CD4-positive, alpha-beta T cell (primary cell): ENCODE measurements at regions of chr3 and their contacts with region 1.

Region 1: GRCh38 chr3:15268033-15268631 is 62.1 kb downstream of the CAPN7 start:
- DNase-seq: peak; percentile 79 to 93 (median 82)
- ATAC-seq: peak; percentile 39
- H3K4me3 ChIP-seq: no peak overlapping the region
- H3K4me3 Mint-ChIP-seq: peak overlapping the region; percentile 8
- H3K27ac ChIP-seq: no peak overlapping the region
- H3K27ac Mint-ChIP-seq: peak overlapping the region; percentile 75
- H3K4me1 ChIP-seq: peaks cover 83% of the 10 kb centered on the region
- H3K4me1 Mint-ChIP-seq: peaks cover 86% of the 10 kb centered on the region
- H3K27me3 ChIP-seq: no peaks in the 10 kb centered on the region
- H3K27me3 Mint-ChIP-seq: no peaks in the 10 kb centered on the region
- CTCF ChIP-seq: peak; percentile 84

Region 2: DNA sequence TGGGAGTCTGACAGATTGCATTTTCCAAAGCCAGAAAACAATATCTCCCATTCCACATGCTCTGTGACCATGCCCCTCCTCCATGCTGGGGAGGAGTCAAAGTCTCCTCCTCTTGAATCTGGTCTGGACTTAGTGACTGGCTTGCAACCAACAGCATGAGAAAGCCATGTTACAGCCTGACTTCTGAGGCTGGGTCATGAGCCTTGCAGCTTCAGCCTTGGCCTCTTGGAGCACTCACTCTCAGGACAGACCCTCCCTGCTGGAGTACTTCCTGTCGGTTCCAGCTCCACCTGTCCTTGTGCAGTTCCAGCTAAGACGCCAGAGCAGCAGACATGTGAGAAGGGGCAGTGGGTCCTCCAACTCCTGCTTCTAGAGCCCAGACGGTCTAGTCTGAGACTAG is 119.5 kb before region 1 on chr3:
- CTCF ChIA-PET with region 1: no interaction called
- POLR2A ChIA-PET with region 1: no interaction called
- intact Hi-C with region 1: no loop called
- DNase-seq: no peak
- ATAC-seq: no peak
- H3K4me3 ChIP-seq: no peak overlapping the region
- H3K4me3 Mint-ChIP-seq: no peak overlapping the region
- H3K27ac ChIP-seq: no peak overlapping the region
- H3K27ac Mint-ChIP-seq: no peak overlapping the region
- H3K4me1 ChIP-seq: no peaks in the 10 kb centered on the region
- H3K4me1 Mint-ChIP-seq: no peaks in the 10 kb centered on the region
- H3K27me3 ChIP-seq: peaks cover 0 to 16% of the 10 kb centered on the region in 2 experiments
- H3K27me3 Mint-ChIP-seq: peaks cover 31% of the 10 kb centered on the region
- CTCF ChIP-seq: no peak

Region 3: GRCh38 chr3:15291589-15292541 is 23.7 kb after region 1 on chr3:
- CTCF ChIA-PET with region 1: interaction called, 9 read pairs
- POLR2A ChIA-PET with region 1: interaction called, 11 read pairs
- intact Hi-C with region 1: loop called in 1 of 2 experiments (anchors 1 kb)
- DNase-seq: peak; percentile 24 to 90 (median 54)
- ATAC-seq: peak; percentile 90
- H3K4me3 ChIP-seq: peak overlapping the region; percentile 17
- H3K4me3 Mint-ChIP-seq: peak overlapping the region; percentile 81
- H3K27ac ChIP-seq: peak overlapping the region; percentile 46 to 71
- H3K27ac Mint-ChIP-seq: peak overlapping the region; percentile 94
- H3K4me1 ChIP-seq: peaks cover 89% of the 10 kb centered on the region
- H3K4me1 Mint-ChIP-seq: peaks cover 96% of the 10 kb centered on the region
- H3K27me3 ChIP-seq: no peaks in the 10 kb centered on the region
- H3K27me3 Mint-ChIP-seq: no peaks in the 10 kb centered on the region
- CTCF ChIP-seq: no peak

Region 4: GRCh38 chr3:15319575-15319974 is 51.4 kb after region 1 on chr3:
- CTCF ChIA-PET with region 1: interaction called, 5 read pairs
- POLR2A ChIA-PET with region 1: interaction called, 11 read pairs
- intact Hi-C with region 1: loop called in 1 of 2 experiments (anchors 2 kb)
- DNase-seq: no peak
- ATAC-seq: no peak
- H3K4me3 ChIP-seq: no peak overlapping the region
- H3K4me3 Mint-ChIP-seq: peak overlapping the region; percentile 43
- H3K27ac ChIP-seq: no peak overlapping the region
- H3K27ac Mint-ChIP-seq: peak overlapping the region; percentile 77
- H3K4me1 ChIP-seq: peaks cover 73% of the 10 kb centered on the region
- H3K4me1 Mint-ChIP-seq: peaks cover 75% of the 10 kb centered on the region
- H3K27me3 ChIP-seq: no peaks in the 10 kb centered on the region
- H3K27me3 Mint-ChIP-seq: no peaks in the 10 kb centered on the region
- CTCF ChIP-seq: no peak

Region 5: GRCh38 chr3:15377961-15378791 is 110.0 kb after region 1 on chr3:
- CTCF ChIA-PET with region 1: interaction called, 14 read pairs
- POLR2A ChIA-PET with region 1: interaction called, 10 read pairs
- intact Hi-C with region 1: loop called (anchors 1 kb)
- DNase-seq: peak; percentile 87 to 98 (median 92)
- ATAC-seq: peak; percentile 95
- H3K4me3 ChIP-seq: no peak overlapping the region
- H3K4me3 Mint-ChIP-seq: peak overlapping the region; percentile 2
- H3K27ac ChIP-seq: peak overlapping the region; percentile 79 to 94
- H3K27ac Mint-ChIP-seq: peak overlapping the region; percentile 91
- H3K4me1 ChIP-seq: peaks cover 8% of the 10 kb centered on the region
- H3K4me1 Mint-ChIP-seq: peaks cover 10% of the 10 kb centered on the region
- H3K27me3 ChIP-seq: no peaks in the 10 kb centered on the region
- H3K27me3 Mint-ChIP-seq: no peaks in the 10 kb centered on the region
- CTCF ChIP-seq: peak; percentile 82

Region 6: GRCh38 chr3:15557511-15557946 is 289.4 kb after region 1 on chr3:
- CTCF ChIA-PET with region 1: interaction called, 5 read pairs
- POLR2A ChIA-PET with region 1: interaction called, 5 read pairs
- intact Hi-C with region 1: loop called (anchors 1 to 2 kb)
- DNase-seq: peak; percentile 17 to 90 (median 38)
- ATAC-seq: peak; percentile 99
- H3K4me3 ChIP-seq: no peak overlapping the region
- H3K4me3 Mint-ChIP-seq: no peak overlapping the region
- H3K27ac ChIP-seq: no peak overlapping the region
- H3K27ac Mint-ChIP-seq: no peak overlapping the region
- H3K4me1 ChIP-seq: peaks cover 10% of the 10 kb centered on the region
- H3K4me1 Mint-ChIP-seq: peaks cover 13% of the 10 kb centered on the region
- H3K27me3 ChIP-seq: no peaks in the 10 kb centered on the region
- H3K27me3 Mint-ChIP-seq: no peaks in the 10 kb centered on the region
- CTCF ChIP-seq: peak; percentile 77